Left cardiac atrium (tissue), 4 donors: ENCODE measurements at regions of chr5 and their contacts with region 1.

Region 1: DNA sequence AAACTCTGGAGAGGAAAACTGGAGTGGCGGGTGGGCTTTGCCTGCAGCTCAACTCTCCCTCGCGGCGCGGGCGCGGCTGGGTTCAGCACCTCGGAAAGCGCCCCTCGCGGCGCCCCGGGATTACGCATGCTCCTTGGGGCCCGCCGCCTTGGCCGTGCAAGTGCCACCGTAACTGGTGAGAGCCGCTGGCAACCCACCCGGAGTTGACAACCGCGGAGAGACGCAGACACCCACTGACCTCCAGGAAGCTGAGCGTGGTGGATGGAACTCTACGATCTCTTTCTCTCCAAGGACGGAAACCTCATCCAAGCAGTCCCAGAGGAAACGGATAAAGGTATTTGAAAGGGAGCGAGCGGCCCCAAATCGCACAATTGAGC is 194 bp upstream of the RXFP3 start:
- DNase-seq: peak; percentile 73
- ATAC-seq: peak; percentile 92 to 94

Region 2: DNA sequence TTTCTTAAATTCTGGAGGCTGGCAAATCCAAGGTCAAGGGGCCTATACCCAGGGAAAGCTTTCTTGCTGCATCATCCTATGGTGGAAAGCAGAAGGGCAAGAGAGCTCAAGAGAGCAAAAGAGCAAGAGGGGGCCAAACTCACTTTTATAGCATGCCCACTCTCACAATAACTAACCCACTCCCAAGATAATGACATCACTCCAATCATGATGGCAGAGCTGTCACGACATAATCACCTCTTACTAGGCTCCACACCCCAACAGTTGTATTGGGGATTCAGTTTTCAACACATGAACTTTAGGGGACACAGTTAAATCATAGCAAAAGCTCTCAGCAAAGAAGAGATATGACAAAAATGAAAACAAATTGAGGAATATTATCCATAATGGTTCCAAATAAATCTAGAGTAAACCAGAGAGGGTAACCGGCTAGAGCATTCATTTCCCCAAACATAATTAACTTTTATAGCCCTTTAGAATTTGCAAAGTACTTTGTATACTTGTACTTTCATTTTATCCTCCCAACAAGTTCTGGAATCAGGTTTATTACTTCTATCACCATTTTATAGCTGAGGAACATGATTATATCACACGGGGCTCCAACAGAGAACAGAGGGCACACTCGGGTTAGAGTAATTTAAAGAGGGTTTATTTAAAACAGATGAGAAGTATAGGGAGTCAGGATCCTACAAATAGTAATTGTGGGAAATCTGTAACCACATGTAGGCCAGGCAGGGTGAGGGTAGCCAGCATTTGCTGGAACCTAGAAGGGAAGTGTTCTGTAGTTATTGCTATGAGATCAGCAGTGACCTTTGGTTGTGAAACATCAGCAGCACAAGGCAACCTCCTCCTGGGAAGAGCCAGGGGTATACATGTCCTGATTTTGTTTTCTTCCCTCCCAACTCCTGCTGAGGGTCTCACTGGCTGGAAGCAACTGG is 502.4 kb before region 1 on chr5:
- intact Hi-C with region 1: loop called (anchors 2 to 10 kb)
- DNase-seq: no peak
- ATAC-seq: no peak

Region 3: DNA sequence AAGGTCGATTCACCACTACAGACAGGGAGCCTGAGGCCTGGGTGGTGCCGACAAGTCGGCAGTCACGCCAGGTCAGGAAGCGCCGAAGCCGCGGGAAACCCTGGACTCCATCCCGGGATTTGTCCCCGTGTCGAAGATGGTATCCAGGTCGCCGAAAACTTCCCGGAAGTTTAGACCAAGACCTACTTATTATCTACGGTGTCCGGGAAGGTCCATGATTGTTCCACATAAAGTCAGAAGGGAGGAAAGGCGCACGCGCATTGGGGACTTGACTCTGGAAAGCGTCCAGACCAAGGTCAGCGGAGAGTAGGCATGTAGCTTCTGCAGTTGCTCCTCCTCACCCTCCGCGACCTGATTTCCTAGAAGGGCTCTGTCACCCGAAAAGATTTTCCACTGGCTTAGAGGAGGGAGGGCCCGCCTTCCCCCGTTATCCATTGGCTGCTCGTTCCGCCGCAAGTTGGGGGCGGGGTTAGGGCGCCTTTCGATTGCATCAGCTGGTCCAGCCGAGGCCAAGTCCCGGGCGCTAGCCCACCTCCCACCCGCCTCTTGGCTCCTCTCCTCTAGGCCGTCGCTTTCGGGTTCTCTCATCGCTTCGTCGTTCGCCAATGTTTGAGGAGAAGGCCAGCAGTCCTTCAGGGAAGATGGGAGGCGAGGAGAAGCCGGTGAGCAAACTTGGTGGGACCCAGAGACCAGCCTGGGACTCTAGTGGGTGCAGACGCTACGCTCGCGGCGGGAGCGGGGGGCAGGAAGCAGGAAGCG is 495.3 kb before region 1 on chr5 and contains the start of gene TARS1:
- intact Hi-C with region 1: loop called (anchors 2 to 10 kb)
- DNase-seq: peak; percentile 98
- ATAC-seq: peak; percentile 98 to 99
- total RNA-seq, gene TARS1: 57.3 to 86.0 TPM